ENCODE measurements at regions of chr4 and their contacts with region 1.

Region 1: DNA sequence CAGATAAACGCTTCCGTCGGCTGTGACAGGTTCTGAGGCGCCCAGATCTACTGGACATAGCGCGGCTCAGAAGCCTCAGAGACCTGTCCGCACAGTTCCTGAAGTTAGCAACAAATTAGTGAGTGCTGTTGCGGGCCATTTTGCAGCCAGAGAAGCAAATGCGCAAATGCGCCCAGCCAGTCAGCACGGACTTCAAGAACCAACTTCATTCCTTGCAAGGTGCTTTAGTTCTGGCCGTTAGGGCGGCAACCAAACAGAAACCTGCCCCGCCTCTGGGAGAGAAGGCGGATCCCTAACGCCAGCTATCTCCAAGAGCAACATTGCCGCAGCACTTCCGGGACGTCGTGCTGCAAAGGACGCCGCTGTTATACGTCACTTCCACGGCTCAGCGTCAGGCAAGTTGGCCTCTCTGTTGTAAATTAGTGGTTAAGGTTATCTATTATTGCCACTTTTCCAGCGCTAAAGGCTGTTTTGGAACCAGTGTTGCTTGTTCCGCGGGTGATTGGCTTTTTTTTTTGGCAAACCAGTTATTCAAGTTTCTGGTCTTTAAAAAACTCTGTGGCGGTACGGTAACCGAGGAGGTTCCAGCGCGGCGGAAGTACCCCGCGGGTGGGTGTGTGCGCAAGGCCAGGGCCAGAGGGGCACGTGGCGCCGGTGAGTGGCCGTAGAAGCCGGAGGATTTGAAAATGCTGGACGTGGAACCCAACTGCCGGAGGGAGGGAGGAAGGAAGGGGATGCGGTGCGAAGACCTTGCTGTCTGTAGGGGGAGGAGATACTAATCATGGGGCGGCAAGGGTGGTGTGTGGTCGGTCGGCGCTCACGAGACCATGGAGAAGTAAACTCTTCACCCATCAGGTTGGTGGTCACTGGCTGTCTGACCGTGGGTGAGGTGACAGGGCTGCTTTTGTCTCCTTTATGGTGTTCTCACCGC is at the start of gene GAR1:
- H3K4me3 Mint-ChIP-seq: peak within 1 kb of the TSS; percentile 89
- H3K27ac Mint-ChIP-seq: peak within 1 kb of the TSS; percentile 93
- H3K4me1 Mint-ChIP-seq: peaks cover 46% of the 10 kb centered on the region
- H3K27me3 Mint-ChIP-seq: no peaks in the 10 kb centered on the region

Region 2: GRCh38 chr4:108620101-108620932 is 1195.1 kb before region 1 on chr4 and contains the start of gene RPL34:
- intact Hi-C with region 1: loop called (anchors 10 kb)
- H3K4me3 Mint-ChIP-seq: peak within 1 kb of the TSS; percentile 91
- H3K27ac Mint-ChIP-seq: peak within 1 kb of the TSS; percentile 95
- H3K4me1 Mint-ChIP-seq: peaks cover 39% of the 10 kb centered on the region
- H3K27me3 Mint-ChIP-seq: no peaks in the 10 kb centered on the region

Region 3: DNA sequence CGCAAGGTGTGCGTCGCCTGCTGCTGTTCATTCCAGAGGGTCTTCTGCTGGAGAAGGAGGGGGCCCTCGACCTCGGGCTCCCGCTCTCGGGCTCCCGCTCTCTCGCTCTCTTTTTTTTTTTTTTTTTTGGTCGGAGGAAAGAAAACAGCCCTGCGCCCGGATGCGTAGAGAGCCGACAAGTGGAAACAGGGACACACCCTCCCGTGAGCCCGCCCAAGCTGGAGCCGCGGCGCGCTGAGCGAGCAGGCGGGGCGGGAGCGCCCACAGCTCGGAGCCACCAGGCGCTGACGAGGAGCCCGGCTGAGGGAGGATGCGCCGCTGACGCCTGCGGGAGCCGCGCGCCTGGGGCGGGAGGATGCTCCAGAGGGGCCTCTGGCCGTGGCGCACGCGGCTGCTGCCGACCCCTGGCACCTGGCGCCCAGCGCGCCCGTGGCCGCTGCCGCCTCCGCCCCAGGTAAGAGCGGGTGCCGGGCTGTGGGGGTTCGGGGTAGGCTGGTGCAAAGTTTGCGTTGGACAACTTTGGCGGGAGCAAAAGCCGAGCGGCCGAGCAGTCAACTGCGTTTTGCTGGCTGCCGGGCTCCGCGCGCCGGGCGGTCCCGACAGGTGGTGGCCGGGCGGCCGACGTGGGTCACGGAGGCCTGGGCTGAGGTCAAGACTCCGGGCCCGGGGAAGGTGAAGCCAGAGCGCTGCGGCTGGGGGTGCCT is 255.3 kb before region 1 on chr4 and contains the start of gene MCUB:
- intact Hi-C with region 1: loop called (anchors 2 kb)
- H3K4me3 Mint-ChIP-seq: peak within 1 kb of the TSS; percentile 84
- H3K27ac Mint-ChIP-seq: peak within 1 kb of the TSS; percentile 92
- H3K4me1 Mint-ChIP-seq: peaks cover 29% of the 10 kb centered on the region
- H3K27me3 Mint-ChIP-seq: no peaks in the 10 kb centered on the region

Region 4: GRCh38 chr4:109729718-109730618 is 85.4 kb before region 1 on chr4 and contains the start of gene PLA2G12A:
- intact Hi-C with region 1: loop called (anchors 1 kb)
- H3K4me3 Mint-ChIP-seq: peak within 1 kb of the TSS; percentile 87
- H3K27ac Mint-ChIP-seq: peak within 1 kb of the TSS; percentile 80
- H3K4me1 Mint-ChIP-seq: peaks cover 17% of the 10 kb centered on the region
- H3K27me3 Mint-ChIP-seq: peaks cover 6% of the 10 kb centered on the region

Region 5: GRCh38 chr4:110091434-110092140 is 276.2 kb after region 1 on chr4:
- intact Hi-C with region 1: no loop called
- H3K4me3 Mint-ChIP-seq: no peak overlapping the region
- H3K27ac Mint-ChIP-seq: no peak overlapping the region
- H3K4me1 Mint-ChIP-seq: no peaks in the 10 kb centered on the region
- H3K27me3 Mint-ChIP-seq: peaks cover 15% of the 10 kb centered on the region